Activated CD4-positive, alpha-beta T cell treated with anti-CD3 and anti-CD28 coated beads for 36 hours (primary cell): ENCODE measurements at regions of chr15 and their contacts with region 1.

Region 1: DNA sequence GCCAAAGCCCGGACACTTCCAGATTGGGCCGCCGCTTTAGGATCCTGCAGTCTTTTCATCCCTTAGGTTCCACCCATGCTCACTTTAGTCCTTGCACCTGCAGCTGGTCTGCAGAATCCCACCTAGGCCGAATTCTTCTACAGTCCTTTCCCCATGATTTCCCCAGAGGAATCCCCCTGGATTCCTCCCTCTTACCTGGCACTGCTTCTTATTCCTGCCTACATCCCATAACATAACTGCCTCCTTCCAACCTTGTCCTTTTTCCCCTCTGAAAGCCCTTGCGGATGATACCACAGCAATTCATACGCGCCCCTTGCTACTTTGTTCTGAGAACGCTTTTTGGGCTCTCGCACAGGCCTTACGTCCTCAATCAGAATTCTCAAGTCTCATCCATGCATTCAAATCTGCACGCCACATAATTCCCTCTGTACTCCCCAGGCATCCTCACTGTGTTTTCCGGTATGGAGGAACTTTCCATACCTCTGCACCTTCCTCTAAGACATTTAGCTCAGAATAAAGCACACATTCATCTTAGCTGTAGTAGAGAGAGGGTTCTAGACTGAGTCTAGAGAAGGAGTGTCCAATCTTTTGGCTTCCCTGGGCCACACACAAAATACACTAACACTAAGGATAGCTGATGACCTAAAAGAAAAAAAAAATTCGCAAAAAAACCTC is 619 bp downstream of the EIF2AK4 start:
- DNase-seq: peak; percentile 24
- ATAC-seq: no peak
- H3K4me3 Mint-ChIP-seq: peak overlapping the region; percentile 95
- H3K27ac Mint-ChIP-seq: peak overlapping the region; percentile 83
- H3K4me1 Mint-ChIP-seq: peaks cover 41% of the 10 kb centered on the region
- H3K27me3 Mint-ChIP-seq: no peaks in the 10 kb centered on the region

Region 2: GRCh38 chr15:39624806-39625205 is 309.7 kb before region 1 on chr15:
- CTCF ChIA-PET with region 1: no interaction called
- POLR2A ChIA-PET with region 1: no interaction called
- intact Hi-C with region 1: loop called in 1 of 2 experiments (anchors 5 kb)
- DNase-seq: peak; percentile 68
- ATAC-seq: peak; percentile 69
- H3K4me3 Mint-ChIP-seq: peak overlapping the region; percentile 18
- H3K27ac Mint-ChIP-seq: peak overlapping the region; percentile 93
- H3K4me1 Mint-ChIP-seq: peaks cover 66% of the 10 kb centered on the region
- H3K27me3 Mint-ChIP-seq: peaks cover 2% of the 10 kb centered on the region

Region 3: GRCh38 chr15:39920510-39921273 is 13.8 kb before region 1 on chr15:
- CTCF ChIA-PET with region 1: interaction called, 21 read pairs
- POLR2A ChIA-PET with region 1: interaction called, 3 read pairs
- intact Hi-C with region 1: loop called (anchors 1 to 2 kb)
- DNase-seq: peak; percentile 93
- ATAC-seq: peak; percentile 89
- H3K4me3 Mint-ChIP-seq: peak overlapping the region; percentile 73
- H3K27ac Mint-ChIP-seq: peak overlapping the region; percentile 73
- H3K4me1 Mint-ChIP-seq: peaks cover 29% of the 10 kb centered on the region
- H3K27me3 Mint-ChIP-seq: peaks cover 19% of the 10 kb centered on the region

Region 4: GRCh38 chr15:39966521-39966920 is 32.0 kb after region 1 on chr15:
- CTCF ChIA-PET with region 1: no interaction called
- POLR2A ChIA-PET with region 1: interaction called, 5 read pairs
- intact Hi-C with region 1: loop called in 1 of 2 experiments (anchors 5 kb)
- DNase-seq: no peak
- ATAC-seq: no peak
- H3K4me3 Mint-ChIP-seq: no peak overlapping the region
- H3K27ac Mint-ChIP-seq: no peak overlapping the region
- H3K4me1 Mint-ChIP-seq: peaks cover 42% of the 10 kb centered on the region
- H3K27me3 Mint-ChIP-seq: no peaks in the 10 kb centered on the region

Region 5: GRCh38 chr15:40160689-40161688 is 226.5 kb after region 1 on chr15 and contains the start of gene BUB1B:
- CTCF ChIA-PET with region 1: no interaction called
- POLR2A ChIA-PET with region 1: no interaction called
- intact Hi-C with region 1: loop called in 1 of 2 experiments (anchors 1 kb)
- DNase-seq: peak; percentile 96
- ATAC-seq: peak; percentile 95
- H3K4me3 Mint-ChIP-seq: no peak within 1 kb of the TSS
- H3K27ac Mint-ChIP-seq: no peak within 1 kb of the TSS
- H3K4me1 Mint-ChIP-seq: peaks cover 8% of the 10 kb centered on the region
- H3K27me3 Mint-ChIP-seq: no peaks in the 10 kb centered on the region
- total RNA-seq, gene BUB1B: 95.3 to 99.5 TPM

Region 6: GRCh38 chr15:40564591-40565332 is 630.2 kb after region 1 on chr15 and contains the start of gene CCDC32:
- CTCF ChIA-PET with region 1: no interaction called
- POLR2A ChIA-PET with region 1: no interaction called
- intact Hi-C with region 1: loop called in 1 of 2 experiments (anchors 10 kb)
- DNase-seq: peak; percentile 97
- ATAC-seq: peak; percentile 97
- H3K4me3 Mint-ChIP-seq: peak within 1 kb of the TSS; percentile 96
- H3K27ac Mint-ChIP-seq: peak within 1 kb of the TSS; percentile 93
- H3K4me1 Mint-ChIP-seq: peaks cover 44% of the 10 kb centered on the region
- H3K27me3 Mint-ChIP-seq: no peaks in the 10 kb centered on the region
- total RNA-seq, gene CCDC32: 14.2 to 24.5 TPM